ENCODE measurements at regions of chr9 and their contacts with region 1.

Region 1: DNA sequence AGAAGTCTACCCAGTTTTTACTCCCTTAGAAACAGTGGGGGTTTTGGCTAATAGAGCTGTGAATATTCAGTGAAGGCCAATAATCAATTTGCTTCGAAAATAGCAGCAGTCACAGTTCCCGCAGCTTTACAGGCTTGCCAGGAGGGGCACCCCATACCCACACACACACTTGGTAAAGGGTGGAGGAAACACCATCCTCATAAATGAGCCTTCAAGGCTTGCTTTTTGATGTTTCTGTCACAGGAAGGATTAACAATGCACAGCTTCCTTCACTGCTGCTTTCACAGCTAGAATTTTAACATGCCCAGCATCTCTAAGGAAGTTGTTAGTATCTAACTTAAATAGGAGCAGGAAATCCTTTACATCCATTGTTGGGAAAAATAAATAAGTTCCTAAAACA is 1247.5 kb upstream of the C9orf72 start:
- DNase-seq: peak; percentile 98
- H3K4me3 ChIP-seq: no peak overlapping the region
- H3K27ac ChIP-seq: peak overlapping the region; percentile 64
- H3K4me1 ChIP-seq: peaks cover 57% of the 10 kb centered on the region
- H3K27me3 ChIP-seq: no peaks in the 10 kb centered on the region
- CTCF ChIP-seq: peak; percentile 69

Region 2: DNA sequence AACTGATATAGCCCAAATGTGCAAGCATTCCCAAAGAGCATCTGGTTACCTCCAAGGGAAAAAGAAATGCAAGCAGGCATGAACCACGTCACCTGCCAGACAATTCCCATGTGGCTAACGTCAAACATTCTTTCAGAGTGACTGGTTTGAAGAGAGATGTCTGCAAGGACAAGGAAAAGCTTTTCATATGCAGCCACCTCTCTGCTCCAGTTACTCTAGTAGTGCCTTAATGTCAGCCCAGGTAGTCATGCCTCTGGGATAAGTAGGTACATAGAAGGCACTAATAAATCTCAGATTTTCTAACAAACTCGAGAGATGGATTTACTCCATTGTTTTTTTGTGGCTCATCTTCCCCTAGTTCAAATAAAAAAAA is 1393.5 kb before region 1 on chr9:
- CTCF ChIA-PET with region 1: no interaction called
- POLR2A ChIA-PET with region 1: no interaction called
- intact Hi-C with region 1: no loop called
- DNase-seq: no peak
- H3K4me3 ChIP-seq: no peak overlapping the region
- H3K27ac ChIP-seq: no peak overlapping the region
- H3K4me1 ChIP-seq: no peaks in the 10 kb centered on the region
- H3K27me3 ChIP-seq: no peaks in the 10 kb centered on the region
- CTCF ChIP-seq: no peak

Region 3: GRCh38 chr9:28363151-28363562 is 457.6 kb before region 1 on chr9:
- CTCF ChIA-PET with region 1: no interaction called
- POLR2A ChIA-PET with region 1: no interaction called
- intact Hi-C with region 1: no loop called
- DNase-seq: no peak
- H3K4me3 ChIP-seq: no peak overlapping the region
- H3K27ac ChIP-seq: no peak overlapping the region
- H3K4me1 ChIP-seq: peaks cover 9% of the 10 kb centered on the region
- H3K27me3 ChIP-seq: no peaks in the 10 kb centered on the region
- CTCF ChIP-seq: no peak

Region 4: GRCh38 chr9:28801144-28801799 is 19.5 kb before region 1 on chr9:
- CTCF ChIA-PET with region 1: no interaction called
- POLR2A ChIA-PET with region 1: no interaction called
- intact Hi-C with region 1: no loop called
- DNase-seq: no peak
- H3K4me3 ChIP-seq: no peak overlapping the region
- H3K27ac ChIP-seq: no peak overlapping the region
- H3K4me1 ChIP-seq: peaks cover 2% of the 10 kb centered on the region
- H3K27me3 ChIP-seq: no peaks in the 10 kb centered on the region
- CTCF ChIP-seq: no peak

Region 5: GRCh38 chr9:28887188-28887884 is 66.6 kb after region 1 on chr9:
- CTCF ChIA-PET with region 1: no interaction called
- POLR2A ChIA-PET with region 1: no interaction called
- intact Hi-C with region 1: loop called (anchors 2 kb)
- DNase-seq: no peak
- H3K4me3 ChIP-seq: no peak overlapping the region
- H3K27ac ChIP-seq: no peak overlapping the region
- H3K4me1 ChIP-seq: peaks cover 19% of the 10 kb centered on the region
- H3K27me3 ChIP-seq: no peaks in the 10 kb centered on the region
- CTCF ChIP-seq: no peak

Region 6: DNA sequence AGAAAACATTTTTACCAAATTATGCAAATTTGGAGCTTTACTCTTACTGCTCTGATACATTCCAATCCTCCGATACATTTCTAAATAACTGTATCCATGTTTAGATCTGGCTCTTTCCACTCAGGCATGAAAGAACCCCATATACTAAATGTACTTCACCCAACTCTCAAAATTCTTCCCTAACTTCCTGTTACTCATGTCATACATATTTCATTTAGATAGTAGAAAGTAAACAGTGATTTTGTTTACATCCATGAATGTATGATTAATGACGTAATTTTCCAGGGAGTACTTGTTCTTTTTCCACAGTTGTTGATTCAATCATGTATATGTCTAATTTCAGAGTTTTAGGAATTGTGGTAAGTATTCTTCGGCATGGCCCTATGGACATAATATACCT is 179.1 kb after region 1 on chr9:
- CTCF ChIA-PET with region 1: no interaction called
- POLR2A ChIA-PET with region 1: no interaction called
- intact Hi-C with region 1: loop called (anchors 5 kb)
- DNase-seq: peak; percentile 37
- H3K4me3 ChIP-seq: no peak overlapping the region
- H3K27ac ChIP-seq: no peak overlapping the region
- H3K4me1 ChIP-seq: peaks cover 59% of the 10 kb centered on the region
- H3K27me3 ChIP-seq: no peaks in the 10 kb centered on the region
- CTCF ChIP-seq: no peak

Region 7: GRCh38 chr9:29211580-29212396 is 391.0 kb after region 1 on chr9:
- CTCF ChIA-PET with region 1: no interaction called
- POLR2A ChIA-PET with region 1: no interaction called
- intact Hi-C with region 1: loop called (anchors 2 kb)
- DNase-seq: peak; percentile 88
- H3K4me3 ChIP-seq: peak overlapping the region; percentile 82
- H3K27ac ChIP-seq: peak overlapping the region; percentile 91
- H3K4me1 ChIP-seq: peaks cover 31% of the 10 kb centered on the region
- H3K27me3 ChIP-seq: no peaks in the 10 kb centered on the region
- CTCF ChIP-seq: peak; percentile 65